Body of pancreas (tissue), 4 donors: ENCODE measurements at regions of chr19 and their contacts with region 1.

Region 1: GRCh38 chr19:50368649-50369570 is 3.5 kb upstream of the NAPSA start:
- DNase-seq: peak; percentile 86 to 92 (median 88)
- ATAC-seq: peak; percentile 94
- H3K4me3 ChIP-seq: peak overlapping the region; percentile 37 to 38
- H3K27ac ChIP-seq: peak overlapping the region; percentile 6 to 85 (median 65)
- H3K4me1 ChIP-seq: peaks cover 5% of the 10 kb centered on the region
- H3K27me3 ChIP-seq: no peaks in the 10 kb centered on the region
- CTCF ChIP-seq: peak; percentile 84 to 90 (median 86)
- POLR2A ChIP-seq: peak in 2 of 3 donors; percentile 22 to 39

Region 2: DNA sequence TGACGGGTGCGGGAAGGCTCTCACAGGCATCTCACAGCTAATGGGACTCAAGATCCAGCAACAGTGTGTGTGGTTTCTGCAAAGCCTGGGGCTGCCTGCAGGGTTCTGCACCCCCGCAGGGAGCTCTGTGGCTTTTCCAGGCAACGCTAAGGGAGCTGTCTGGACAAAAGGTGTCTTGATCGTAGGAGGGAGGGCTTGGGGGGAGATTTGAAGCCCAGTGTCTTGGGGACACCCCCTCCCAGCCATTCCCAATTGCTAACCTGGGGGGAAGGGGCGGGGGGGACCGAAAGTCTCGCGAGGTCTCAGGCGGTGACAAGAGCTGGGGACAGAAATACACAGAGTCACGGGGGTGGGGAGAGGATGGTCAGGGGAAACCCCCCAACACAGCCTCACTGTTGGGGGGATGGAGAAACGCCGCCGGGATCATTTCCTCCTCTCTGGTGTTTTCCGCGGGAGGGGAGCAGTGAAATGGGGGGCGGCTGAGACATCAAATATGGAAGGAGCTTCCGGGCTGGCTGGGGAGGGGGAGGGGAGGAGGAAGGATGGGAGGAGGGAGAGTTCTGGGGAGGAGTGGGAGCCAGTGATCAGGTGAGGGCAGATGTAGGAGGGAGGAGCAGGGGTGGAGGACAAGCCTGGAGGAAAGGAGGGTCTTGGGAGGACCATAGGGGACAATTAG is 53.0 kb before region 1 on chr19:
- intact Hi-C with region 1: no loop called
- DNase-seq: no peak
- ATAC-seq: no peak
- H3K4me3 ChIP-seq: no peak overlapping the region
- H3K27ac ChIP-seq: no peak overlapping the region
- H3K4me1 ChIP-seq: peaks cover 9% of the 10 kb centered on the region
- H3K27me3 ChIP-seq: peaks cover 0 to 19% of the 10 kb centered on the region in 2 donors
- CTCF ChIP-seq: no peak
- POLR2A ChIP-seq: no peak

Region 3: DNA sequence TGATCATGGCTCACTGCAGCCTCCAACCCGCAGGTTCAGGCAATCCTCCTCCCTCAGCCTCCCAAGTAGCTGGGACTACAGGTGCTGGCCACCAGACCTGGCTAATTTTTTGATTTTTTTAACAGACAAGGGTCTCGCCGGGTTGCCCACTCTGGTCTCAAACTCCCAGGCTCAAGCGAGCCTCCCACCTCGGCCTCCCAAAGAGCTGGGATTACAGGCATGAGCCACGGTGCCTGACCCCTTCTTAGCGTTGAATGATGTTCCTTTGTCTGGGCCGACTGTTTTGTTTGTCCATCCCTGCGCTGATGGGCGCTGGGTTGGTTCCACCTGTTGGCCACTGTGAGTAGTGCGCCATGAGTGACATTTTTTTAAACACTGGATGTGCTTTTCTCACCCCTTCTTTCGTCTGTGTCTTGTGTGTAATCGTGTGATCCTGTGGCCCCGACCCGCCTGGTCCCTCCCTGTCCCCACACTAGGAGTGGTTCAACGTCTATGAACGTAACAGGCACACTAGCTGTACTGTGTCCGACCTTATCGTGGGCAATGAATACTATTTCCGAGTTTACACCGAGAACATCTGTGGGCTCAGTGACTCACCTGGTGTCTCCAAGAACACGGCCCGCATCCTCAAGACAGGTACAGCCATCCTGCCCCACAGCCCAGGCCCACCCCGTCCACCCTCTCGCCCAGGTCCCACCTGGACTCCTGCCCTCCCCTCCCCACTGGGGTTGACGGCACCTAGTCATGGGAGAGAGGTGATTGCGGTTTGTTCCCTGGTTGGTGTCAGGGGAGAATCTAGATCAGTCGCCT is 92.4 kb after region 1 on chr19:
- intact Hi-C with region 1: loop called (anchors 5 kb)
- DNase-seq: peak; percentile 58 to 67 (median 64)
- ATAC-seq: peak; percentile 82
- H3K4me3 ChIP-seq: no peak overlapping the region
- H3K27ac ChIP-seq: no peak overlapping the region
- H3K4me1 ChIP-seq: no peaks in the 10 kb centered on the region
- H3K27me3 ChIP-seq: peaks cover 0 to 11% of the 10 kb centered on the region in 2 donors
- CTCF ChIP-seq: peak; percentile 72 to 92 (median 84)
- POLR2A ChIP-seq: no peak

Region 4: GRCh38 chr19:50785329-50785728 is 416.4 kb after region 1 on chr19:
- intact Hi-C with region 1: loop called (anchors 5 kb)
- DNase-seq: no peak
- ATAC-seq: no peak
- H3K4me3 ChIP-seq: no peak overlapping the region
- H3K27ac ChIP-seq: no peak overlapping the region
- H3K4me1 ChIP-seq: no peaks in the 10 kb centered on the region
- H3K27me3 ChIP-seq: peaks cover 0 to 15% of the 10 kb centered on the region in 2 donors
- CTCF ChIP-seq: no peak
- POLR2A ChIP-seq: no peak